Psoas muscle (tissue), 8 donors: ENCODE measurements at regions of chr1 and their contacts with region 1.

Region 1: GRCh38 chr1:59150577-59151391 is 146.1 kb upstream of the FGGY start:
- DNase-seq: peak; percentile 87 to 94
- ATAC-seq: peak; percentile 92 to 97 (median 95)
- H3K4me3 ChIP-seq: peak overlapping the region; percentile 50
- H3K27ac ChIP-seq: peak overlapping the region; percentile 89
- H3K4me1 ChIP-seq: peaks cover 45% of the 10 kb centered on the region
- H3K27me3 ChIP-seq: no peaks in the 10 kb centered on the region
- CTCF ChIP-seq: no peak

Region 2: DNA sequence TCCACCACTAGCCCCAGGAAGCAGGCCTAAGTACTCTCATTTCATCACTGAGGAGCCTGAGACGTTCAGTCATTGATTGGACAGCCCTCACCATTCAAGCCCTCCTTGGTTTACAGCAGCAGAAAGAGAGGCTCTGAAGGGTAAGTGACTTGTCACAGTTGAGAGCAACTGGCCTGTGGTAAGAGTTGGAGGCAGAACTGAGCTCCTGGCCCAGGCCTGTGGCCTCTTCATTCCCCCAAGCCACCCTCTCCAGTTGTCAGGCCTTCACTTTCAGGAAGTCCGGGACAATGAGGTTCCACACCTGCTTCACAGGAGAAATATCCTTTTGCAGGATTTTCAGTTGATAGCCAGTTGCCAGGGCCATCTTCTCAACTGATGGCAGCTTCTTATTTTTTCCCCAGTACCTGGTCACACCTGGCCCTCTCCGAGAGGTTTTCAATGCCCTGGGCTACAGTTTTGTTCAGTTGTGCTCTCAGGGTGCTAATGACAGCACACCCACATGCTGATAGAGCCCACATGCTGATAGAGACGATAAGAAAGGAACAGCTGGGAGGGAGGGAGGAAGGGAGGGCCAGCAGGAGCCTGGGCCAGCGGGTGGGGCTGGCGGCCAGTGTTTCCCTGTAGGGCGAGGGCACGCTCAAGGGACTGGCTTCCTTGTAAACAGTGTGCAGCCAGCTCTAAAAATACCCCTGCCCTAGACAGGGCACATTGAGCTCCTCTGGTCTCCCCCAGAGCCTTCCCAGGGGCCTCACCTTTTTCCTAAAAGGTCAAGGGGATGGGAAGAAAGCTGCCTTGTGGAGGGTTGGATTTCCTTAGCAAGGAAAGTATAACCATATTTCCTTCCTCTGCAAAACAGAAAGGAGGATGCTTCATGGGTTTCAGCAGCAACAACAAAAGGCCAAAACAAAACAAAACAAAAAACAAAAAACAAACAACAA is 254.3 kb before region 1 on chr1:
- intact Hi-C with region 1: loop called (anchors 5 to 10 kb)
- DNase-seq: peak; percentile 73 to 92
- ATAC-seq: peak; percentile 92 to 95 (median 92)
- H3K4me3 ChIP-seq: no peak overlapping the region
- H3K27ac ChIP-seq: peak overlapping the region; percentile 95
- H3K4me1 ChIP-seq: peaks cover 87% of the 10 kb centered on the region
- H3K27me3 ChIP-seq: no peaks in the 10 kb centered on the region
- CTCF ChIP-seq: no peak

Region 3: GRCh38 chr1:58903514-58904298 is 247.1 kb before region 1 on chr1:
- intact Hi-C with region 1: loop called (anchors 5 to 10 kb)
- DNase-seq: peak; percentile 95 to 97
- ATAC-seq: peak; percentile 90 to 94 (median 92)
- H3K4me3 ChIP-seq: peak overlapping the region; percentile 72
- H3K27ac ChIP-seq: peak overlapping the region; percentile 95
- H3K4me1 ChIP-seq: peaks cover 59% of the 10 kb centered on the region
- H3K27me3 ChIP-seq: no peaks in the 10 kb centered on the region
- CTCF ChIP-seq: no peak

Region 4: GRCh38 chr1:59015708-59016107 is 135.1 kb before region 1 on chr1:
- intact Hi-C with region 1: loop called in 1 of 2 experiments (anchors 5 kb)
- DNase-seq: no peak
- ATAC-seq: peak in 1 of 4 donors; percentile 30
- H3K4me3 ChIP-seq: no peak overlapping the region
- H3K27ac ChIP-seq: no peak overlapping the region
- H3K4me1 ChIP-seq: peaks cover 43% of the 10 kb centered on the region
- H3K27me3 ChIP-seq: no peaks in the 10 kb centered on the region
- CTCF ChIP-seq: no peak

Region 5: GRCh38 chr1:59699227-59699847 is 548.6 kb after region 1 on chr1:
- intact Hi-C with region 1: loop called (anchors 5 to 10 kb)
- DNase-seq: no peak
- ATAC-seq: peak; percentile 56 to 68 (median 65)
- H3K4me3 ChIP-seq: peak overlapping the region; percentile 59
- H3K27ac ChIP-seq: peak overlapping the region; percentile 87
- H3K4me1 ChIP-seq: peaks cover 58% of the 10 kb centered on the region
- H3K27me3 ChIP-seq: no peaks in the 10 kb centered on the region
- CTCF ChIP-seq: peak; percentile 96

Region 6: DNA sequence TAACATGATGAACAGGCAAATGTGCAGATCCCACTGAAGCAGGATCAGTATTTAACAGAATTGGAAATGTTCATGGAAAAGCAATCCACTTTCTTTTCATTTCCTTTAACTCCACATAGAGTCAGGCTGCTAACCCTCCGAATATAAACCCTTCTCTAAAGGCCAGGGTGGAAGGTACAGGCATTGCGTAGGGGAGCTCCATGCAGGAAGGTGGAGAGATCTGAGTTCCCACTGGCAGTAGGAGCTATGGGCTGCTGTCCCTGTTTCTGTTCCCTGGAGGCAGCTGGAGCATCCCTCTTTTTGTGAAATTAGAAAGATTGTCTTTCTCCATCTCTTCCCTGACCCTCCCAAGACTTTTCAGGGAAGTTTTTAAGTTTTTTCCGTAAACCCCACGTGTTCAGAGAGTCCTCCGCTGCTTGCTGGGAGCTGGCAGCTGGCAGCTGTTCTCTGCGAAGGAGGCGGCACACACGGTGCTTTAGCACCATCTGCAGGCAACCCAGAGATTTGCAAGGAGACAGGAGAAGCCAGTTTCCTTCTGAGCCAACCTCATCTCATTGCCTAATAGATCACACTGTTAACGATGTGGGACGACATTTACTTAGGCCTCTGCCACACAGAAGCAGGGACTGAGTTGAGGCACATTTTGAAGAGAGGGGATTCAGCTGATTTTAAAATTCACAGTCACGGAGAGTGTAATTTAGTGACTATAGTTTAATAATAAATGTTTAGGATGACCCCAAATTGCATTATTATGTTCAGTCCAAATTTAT is 608.6 kb after region 1 on chr1:
- intact Hi-C with region 1: loop called in 1 of 2 experiments (anchors 5 kb)
- DNase-seq: peak; percentile 81 to 92
- ATAC-seq: peak; percentile 96 to 97 (median 97)
- H3K4me3 ChIP-seq: peak overlapping the region; percentile 51
- H3K27ac ChIP-seq: peak overlapping the region; percentile 79
- H3K4me1 ChIP-seq: peaks cover 12% of the 10 kb centered on the region
- H3K27me3 ChIP-seq: no peaks in the 10 kb centered on the region
- CTCF ChIP-seq: peak; percentile 98